Activated T-helper 2 cell treated with anti-CD3 and anti-CD28 coated beads, Interferon-gamma antibody, Interleukin-2, Interleukin-4, amounts not matched to agents 10 μg/mL and 5 μg/mL and 100 μg/mL, durations not matched to agents 14 hours and 24 hours and 36 hours (primary cell): ENCODE measurements at regions of chr7 and their contacts with region 1.

Region 1: DNA sequence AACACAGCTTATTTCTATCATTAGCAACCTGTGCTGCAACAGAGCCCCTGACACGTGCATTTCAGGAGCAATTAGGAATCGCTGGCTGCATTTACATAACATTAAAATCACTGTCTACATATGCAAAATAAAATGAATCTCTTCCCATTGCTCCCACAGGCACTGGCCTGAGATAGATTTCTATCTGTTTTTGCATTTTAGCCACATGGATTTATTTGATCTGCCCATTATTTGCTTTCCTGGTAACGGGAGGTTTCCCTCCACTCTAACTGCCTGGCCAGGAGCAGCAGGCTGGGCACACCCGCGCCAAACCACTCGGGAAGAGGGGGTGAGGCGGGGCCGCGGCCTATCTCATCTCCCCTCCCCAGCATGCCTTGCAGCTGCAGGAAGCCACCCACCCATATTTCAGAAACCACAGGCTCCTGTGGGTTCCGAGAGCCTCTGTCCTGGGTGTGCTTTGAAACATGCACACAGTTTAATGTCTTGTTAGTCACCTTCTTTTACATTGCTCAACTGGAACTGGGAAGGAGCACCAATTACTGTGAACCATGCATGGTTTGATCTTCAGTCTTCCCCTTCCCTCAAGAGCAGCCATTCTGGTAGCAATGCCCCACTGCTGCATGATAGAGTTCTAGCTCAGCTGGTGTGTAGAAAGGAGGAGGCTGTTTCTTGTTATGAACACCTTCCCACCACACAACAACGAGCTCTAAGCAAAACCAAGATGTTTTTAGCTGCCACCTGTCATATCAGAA is 37.7 kb upstream of the IKZF1 start:
- DNase-seq: peak; percentile 78
- H3K4me3 Mint-ChIP-seq: peak overlapping the region; percentile 68
- H3K27ac Mint-ChIP-seq: peak overlapping the region; percentile 94
- H3K4me1 Mint-ChIP-seq: peaks cover 88% of the 10 kb centered on the region
- H3K27me3 Mint-ChIP-seq: no peaks in the 10 kb centered on the region

Region 2: GRCh38 chr7:50205011-50205410 is 61.8 kb before region 1 on chr7:
- intact Hi-C with region 1: loop called (anchors 1 kb)
- DNase-seq: no peak
- H3K4me3 Mint-ChIP-seq: no peak overlapping the region
- H3K27ac Mint-ChIP-seq: no peak overlapping the region
- H3K4me1 Mint-ChIP-seq: peaks cover 83% of the 10 kb centered on the region
- H3K27me3 Mint-ChIP-seq: no peaks in the 10 kb centered on the region

Region 3: DNA sequence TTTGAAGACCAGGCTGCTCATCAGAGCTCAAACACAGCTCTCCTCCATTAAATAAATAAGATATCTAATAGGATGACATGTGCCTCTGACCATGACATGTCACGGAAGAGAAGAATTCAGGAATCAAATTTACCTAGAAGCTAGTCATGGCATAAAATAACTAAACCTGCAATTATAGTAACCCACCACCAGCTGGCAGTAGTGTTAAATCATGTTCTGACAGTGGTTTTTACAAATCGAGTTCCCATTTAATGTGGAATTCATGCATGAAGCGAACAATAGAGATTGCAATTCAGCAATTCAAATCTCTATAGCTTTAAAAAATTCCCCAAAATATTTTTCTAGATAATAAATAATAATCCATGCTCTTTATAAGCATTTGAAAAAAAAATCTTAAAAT is 36.8 kb before region 1 on chr7:
- intact Hi-C with region 1: loop called (anchors 1 kb)
- DNase-seq: no peak
- H3K4me3 Mint-ChIP-seq: no peak overlapping the region
- H3K27ac Mint-ChIP-seq: no peak overlapping the region
- H3K4me1 Mint-ChIP-seq: peaks cover 38% of the 10 kb centered on the region
- H3K27me3 Mint-ChIP-seq: no peaks in the 10 kb centered on the region

Region 4: DNA sequence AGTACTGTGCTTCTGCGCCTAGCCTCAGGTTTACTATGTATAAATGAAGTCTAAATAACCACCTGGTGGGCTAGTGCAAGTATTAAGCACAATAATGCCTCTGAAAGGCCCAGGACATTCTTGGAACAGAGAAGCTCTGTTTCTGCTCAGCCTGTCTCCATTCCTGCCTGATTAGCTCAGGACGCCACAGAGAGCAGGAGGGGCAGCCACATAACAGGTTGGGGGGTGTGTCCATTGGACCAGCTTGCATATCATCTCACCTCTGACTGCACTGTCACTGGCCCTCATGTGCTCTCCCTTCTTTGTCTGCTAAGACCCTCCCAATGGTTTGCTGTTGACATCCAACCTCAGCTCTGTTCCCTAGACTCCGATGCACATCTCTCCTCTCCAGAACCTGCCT is 15.0 kb before region 1 on chr7:
- intact Hi-C with region 1: no loop called
- DNase-seq: no peak
- H3K4me3 Mint-ChIP-seq: no peak overlapping the region
- H3K27ac Mint-ChIP-seq: no peak overlapping the region
- H3K4me1 Mint-ChIP-seq: peaks cover 10% of the 10 kb centered on the region
- H3K27me3 Mint-ChIP-seq: no peaks in the 10 kb centered on the region

Region 5: GRCh38 chr7:50293509-50294179 is 26.8 kb after region 1 on chr7:
- intact Hi-C with region 1: loop called (anchors 1 kb)
- DNase-seq: no peak
- H3K4me3 Mint-ChIP-seq: no peak overlapping the region
- H3K27ac Mint-ChIP-seq: no peak overlapping the region
- H3K4me1 Mint-ChIP-seq: peaks cover 34% of the 10 kb centered on the region
- H3K27me3 Mint-ChIP-seq: peaks cover 5% of the 10 kb centered on the region

Region 6: GRCh38 chr7:50349963-50350944 is 83.4 kb after region 1 on chr7:
- intact Hi-C with region 1: loop called (anchors 1 kb)
- DNase-seq: peak; percentile 80
- H3K4me3 Mint-ChIP-seq: peak overlapping the region; percentile 49
- H3K27ac Mint-ChIP-seq: peak overlapping the region; percentile 91
- H3K4me1 Mint-ChIP-seq: peaks cover 96% of the 10 kb centered on the region
- H3K27me3 Mint-ChIP-seq: no peaks in the 10 kb centered on the region

Region 7: DNA sequence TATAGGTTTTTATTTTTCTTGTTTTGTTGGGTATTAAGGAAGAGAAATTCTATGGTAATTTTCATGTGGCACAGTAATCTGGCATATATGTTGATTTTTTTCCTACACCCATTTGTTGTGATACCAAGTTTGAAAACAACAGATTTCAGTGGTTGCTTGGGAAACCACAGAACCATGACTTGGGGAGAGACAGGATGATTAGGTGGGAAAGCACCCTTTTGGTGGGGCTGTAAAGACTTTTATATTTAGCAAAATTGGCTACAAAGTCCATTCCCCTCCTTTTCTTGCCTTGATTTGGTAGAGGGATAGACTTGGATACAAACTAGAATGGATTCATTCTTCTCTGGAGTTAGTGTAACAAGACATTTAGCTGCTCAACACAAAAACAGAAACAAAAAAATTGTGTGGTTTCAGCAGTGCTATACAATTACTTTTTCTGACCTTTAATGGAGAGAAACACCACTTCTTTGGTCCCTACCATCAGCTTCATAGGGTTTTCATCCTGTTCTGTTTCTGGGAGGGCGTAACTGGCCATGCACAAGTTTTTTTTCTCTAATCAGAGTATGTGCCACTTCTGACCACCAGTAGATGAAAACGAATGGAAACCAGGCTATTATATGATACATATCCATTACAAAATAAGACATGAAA is 130.6 kb after region 1 on chr7:
- intact Hi-C with region 1: loop called (anchors 1 kb)
- DNase-seq: no peak
- H3K4me3 Mint-ChIP-seq: no peak overlapping the region
- H3K27ac Mint-ChIP-seq: peak overlapping the region; percentile 94
- H3K4me1 Mint-ChIP-seq: peaks cover 62% of the 10 kb centered on the region
- H3K27me3 Mint-ChIP-seq: no peaks in the 10 kb centered on the region